ENCODE measurements at regions of chr12 and their contacts with region 1.

Region 1: GRCh38 chr12:70576346-70577282 is 60.6 kb downstream of the PTPRB start:
- DNase-seq: peak; percentile 86
- H3K4me3 ChIP-seq: no peak overlapping the region
- H3K27ac ChIP-seq: no peak overlapping the region
- H3K4me1 ChIP-seq: peaks cover 6% of the 10 kb centered on the region
- H3K27me3 ChIP-seq: peaks cover 3% of the 10 kb centered on the region
- CTCF ChIP-seq: peak; percentile 79

Region 2: GRCh38 chr12:69779928-69780327 is 796.7 kb before region 1 on chr12:
- CTCF ChIA-PET with region 1: interaction called, 7 read pairs
- POLR2A ChIA-PET with region 1: no interaction called
- intact Hi-C with region 1: loop called (anchors 5 kb)
- DNase-seq: peak; percentile 76
- H3K4me3 ChIP-seq: no peak overlapping the region
- H3K27ac ChIP-seq: no peak overlapping the region
- H3K4me1 ChIP-seq: no peaks in the 10 kb centered on the region
- H3K27me3 ChIP-seq: no peaks in the 10 kb centered on the region
- CTCF ChIP-seq: peak; percentile 87

Measured in A673 (cell line).